ENCODE measurements at regions of chr11 and their contacts with region 1.

Region 1: GRCh38 chr11:65013692-65014145 is 241 bp upstream of the ARL2 start:
- DNase-seq: peak; percentile 94 to 98 (median 98)
- ATAC-seq: peak; percentile 93 to 95
- H3K4me3 ChIP-seq: peak overlapping the region; percentile 58
- H3K27ac ChIP-seq: peak overlapping the region; percentile 90
- H3K4me1 ChIP-seq: no peaks in the 10 kb centered on the region
- H3K27me3 ChIP-seq: no peaks in the 10 kb centered on the region

Region 2: DNA sequence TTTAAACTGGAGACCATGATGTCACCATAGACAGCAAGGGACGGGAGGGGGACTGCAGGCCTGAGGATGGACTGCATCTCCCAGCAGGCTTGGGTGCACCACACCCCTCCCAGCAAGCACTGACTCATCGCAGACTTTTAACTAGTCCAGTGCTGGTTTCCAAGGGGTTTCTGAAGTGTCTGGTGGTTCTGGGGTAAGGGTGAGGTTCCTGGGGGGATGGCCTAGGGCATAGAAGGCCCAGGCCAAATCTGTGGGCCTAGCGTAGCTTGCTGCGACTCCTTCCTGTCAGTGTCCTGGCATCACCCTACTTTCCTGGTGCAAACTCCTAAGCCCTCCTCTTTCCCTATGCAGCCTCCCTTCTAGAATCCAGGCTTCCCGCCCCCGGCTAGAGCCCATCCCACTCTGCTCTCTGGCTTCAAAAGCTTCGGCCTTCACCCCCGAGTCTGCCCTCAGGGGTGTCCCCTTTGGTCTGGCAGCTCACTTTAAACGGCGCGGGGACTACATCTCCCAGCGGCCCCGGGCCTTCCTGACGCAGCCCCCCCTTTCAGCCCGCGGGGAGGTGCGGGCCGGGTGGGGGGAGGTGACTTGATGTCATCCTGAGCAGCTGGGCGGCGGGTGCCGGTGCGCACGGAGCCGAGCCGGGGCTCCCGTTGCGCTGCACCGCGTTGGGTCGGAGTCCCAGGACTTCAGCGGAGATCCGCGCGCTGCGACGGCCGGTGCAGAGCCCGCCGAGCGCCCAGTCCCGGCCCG is 89.4 kb before region 1 on chr11 and contains the start of gene PPP2R5B:
- intact Hi-C with region 1: loop called in 1 of 4 experiments (anchors 10 kb)
- DNase-seq: peak; percentile 94 to 98 (median 97)
- ATAC-seq: peak; percentile 96 to 97
- H3K4me3 ChIP-seq: peak within 1 kb of the TSS; percentile 75
- H3K27ac ChIP-seq: peak within 1 kb of the TSS; percentile 96
- H3K4me1 ChIP-seq: no peaks in the 10 kb centered on the region
- H3K27me3 ChIP-seq: no peaks in the 10 kb centered on the region
- total RNA-seq, gene PPP2R5B: 21.7 to 28.0 (median 24.6) TPM

Region 3: GRCh38 chr11:65180877-65181568 is 167.3 kb after region 1 on chr11:
- intact Hi-C with region 1: no loop called
- DNase-seq: peak; percentile 72 to 90 (median 86)
- ATAC-seq: peak; percentile 67 to 68
- H3K4me3 ChIP-seq: peak overlapping the region; percentile 85
- H3K27ac ChIP-seq: peak overlapping the region; percentile 76
- H3K4me1 ChIP-seq: no peaks in the 10 kb centered on the region
- H3K27me3 ChIP-seq: no peaks in the 10 kb centered on the region

Measured in right cardiac atrium (tissue), 5 donors.